Heart right ventricle (tissue), 16 donors: ENCODE measurements at regions of chr20 and their contacts with region 1.

Region 1: DNA sequence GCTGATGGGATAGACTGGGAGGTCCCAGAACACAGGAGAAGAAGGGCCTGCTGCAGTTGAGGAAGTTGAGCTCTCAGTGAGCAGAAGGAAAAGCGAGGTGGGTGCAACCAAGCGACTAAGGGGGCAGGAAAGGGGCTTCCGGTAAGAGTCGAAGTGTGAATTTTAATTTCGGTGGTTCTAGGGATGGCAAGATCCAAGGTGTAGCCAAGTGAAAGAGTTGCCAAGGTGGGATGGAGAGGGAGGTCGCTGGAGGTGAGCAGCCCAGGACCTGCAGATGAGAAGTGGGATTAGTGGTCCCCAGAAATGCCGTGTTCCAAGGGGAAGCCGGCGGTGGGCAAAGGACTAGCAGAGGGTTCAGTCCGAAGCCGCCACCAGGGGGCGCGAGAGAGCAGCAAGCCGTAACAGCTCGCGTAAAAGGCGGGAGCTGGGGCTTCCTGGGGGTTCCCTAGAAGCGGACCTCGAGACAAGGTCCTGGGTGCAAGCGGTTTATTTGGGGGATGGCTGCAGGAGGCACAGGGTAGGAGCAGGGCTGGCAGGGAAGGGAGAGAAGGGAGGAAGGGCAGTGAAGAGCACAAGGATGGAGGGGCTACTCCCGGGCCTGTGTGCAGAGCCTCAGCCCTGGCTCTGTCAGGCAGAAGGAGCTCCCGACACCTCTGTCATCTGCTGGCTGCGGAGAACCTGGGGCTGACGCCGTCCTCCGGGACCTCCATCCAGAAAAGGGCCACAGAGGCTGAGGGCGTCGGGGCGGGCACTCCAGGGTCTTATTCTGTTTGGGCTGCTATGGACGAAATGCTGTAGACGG is 103.6 kb downstream of the PAX1 start:
- DNase-seq: peak; percentile 24 to 53
- ATAC-seq: peak in 2 of 8 donors; percentile 48 to 64
- H3K4me3 ChIP-seq: no peak overlapping the region
- H3K27ac ChIP-seq: no peak overlapping the region
- H3K4me1 ChIP-seq: no peaks in the 10 kb centered on the region
- H3K27me3 ChIP-seq: peaks cover 0 to 24% (median 0%) of the 10 kb centered on the region in 7 donors
- CTCF ChIP-seq: peak; percentile 58 to 82 (median 74)

Region 2: DNA sequence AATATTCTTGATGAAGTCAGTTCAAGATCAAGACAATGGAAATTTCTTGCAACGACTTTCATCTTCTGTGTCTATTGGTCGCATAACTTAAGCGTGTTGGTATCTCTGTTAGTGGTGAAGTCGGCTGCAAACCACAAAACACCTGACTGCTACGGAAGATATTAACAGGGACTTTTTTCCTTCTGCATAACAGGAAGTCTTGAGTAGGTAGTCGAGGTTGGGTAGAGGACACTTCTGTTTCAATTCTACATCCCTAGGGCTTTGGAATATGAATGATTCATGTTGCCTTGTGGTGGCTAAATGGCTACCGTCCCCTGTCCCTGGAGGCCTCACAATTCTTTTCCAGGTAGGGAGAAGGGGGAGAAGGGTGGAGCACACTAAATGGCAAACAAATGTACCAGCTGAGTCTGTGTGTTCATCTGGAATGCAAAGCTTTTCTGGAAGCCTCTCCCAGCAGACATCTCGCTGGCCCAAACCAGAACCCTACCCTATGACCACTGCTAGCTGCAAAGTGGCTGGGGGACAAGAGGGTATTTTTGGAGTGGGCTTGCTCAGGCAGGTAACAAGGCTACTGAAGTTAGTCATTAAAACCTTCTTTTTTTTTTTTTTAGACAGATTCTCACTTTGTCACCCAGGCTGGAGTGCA is 260.6 kb before region 1 on chr20:
- intact Hi-C with region 1: no loop called
- DNase-seq: no peak
- ATAC-seq: no peak
- H3K4me3 ChIP-seq: no peak overlapping the region
- H3K27ac ChIP-seq: no peak overlapping the region
- H3K4me1 ChIP-seq: no peaks in the 10 kb centered on the region
- H3K27me3 ChIP-seq: peaks cover 0 to 45% (median 23%) of the 10 kb centered on the region in 7 donors
- CTCF ChIP-seq: no peak

Region 3: DNA sequence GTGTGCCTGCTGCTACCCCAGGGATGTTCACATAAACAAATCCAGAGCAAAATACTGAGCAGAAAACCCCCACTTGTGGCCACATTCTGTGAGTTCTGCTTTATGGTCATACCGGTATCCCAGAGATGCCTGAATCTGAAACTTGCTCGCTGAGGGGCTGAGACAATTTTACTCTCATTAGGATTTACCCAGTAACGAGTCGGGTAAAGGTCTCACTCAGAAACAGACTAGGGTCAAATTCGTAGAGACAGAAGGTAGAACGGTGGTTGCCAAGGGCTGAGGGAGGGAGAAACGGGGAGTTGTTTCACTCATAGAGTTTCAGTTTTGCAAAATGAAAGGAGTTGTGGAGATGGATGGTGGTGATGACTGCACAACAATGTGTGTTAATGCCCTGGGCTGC is 249.8 kb before region 1 on chr20:
- intact Hi-C with region 1: no loop called
- DNase-seq: no peak
- ATAC-seq: no peak
- H3K4me3 ChIP-seq: no peak overlapping the region
- H3K27ac ChIP-seq: no peak overlapping the region
- H3K4me1 ChIP-seq: no peaks in the 10 kb centered on the region
- H3K27me3 ChIP-seq: peaks cover 0 to 74% (median 34%) of the 10 kb centered on the region in 7 donors
- CTCF ChIP-seq: no peak

Region 4: DNA sequence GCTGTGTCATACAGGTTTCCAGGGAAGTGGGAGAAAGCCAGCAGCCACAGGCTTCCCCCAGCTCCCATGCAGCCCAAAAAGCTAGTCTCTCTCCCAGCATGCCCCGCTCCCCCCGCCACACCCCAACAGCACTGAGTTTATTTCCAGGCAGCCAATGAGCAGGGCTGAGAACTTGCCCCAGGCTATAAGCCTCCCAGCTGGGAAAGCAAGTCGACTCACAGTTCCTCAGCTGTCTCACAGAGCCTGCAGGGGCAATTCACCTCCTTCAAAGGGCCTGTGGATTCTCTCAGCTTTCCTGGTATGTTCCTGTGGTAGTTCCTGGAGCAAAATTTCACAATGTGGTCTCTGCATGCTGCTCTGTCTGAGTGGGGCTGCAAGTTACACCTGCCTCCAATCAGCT is 69.4 kb before region 1 on chr20:
- intact Hi-C with region 1: no loop called
- DNase-seq: no peak
- ATAC-seq: no peak
- H3K4me3 ChIP-seq: no peak overlapping the region
- H3K27ac ChIP-seq: no peak overlapping the region
- H3K4me1 ChIP-seq: no peaks in the 10 kb centered on the region
- H3K27me3 ChIP-seq: no peaks in the 10 kb centered on the region
- CTCF ChIP-seq: no peak

Region 5: GRCh38 chr20:22106308-22106938 is 297.4 kb after region 1 on chr20:
- intact Hi-C with region 1: loop called in 7 of 10 experiments (anchors 5 to 10 kb)
- DNase-seq: no peak
- ATAC-seq: no peak
- H3K4me3 ChIP-seq: no peak overlapping the region
- H3K27ac ChIP-seq: no peak overlapping the region
- H3K4me1 ChIP-seq: no peaks in the 10 kb centered on the region
- H3K27me3 ChIP-seq: no peaks in the 10 kb centered on the region
- CTCF ChIP-seq: peak in 7 of 9 donors; percentile 32 to 59 (median 46)

Region 6: GRCh38 chr20:22248051-22248667 is 439.1 kb after region 1 on chr20:
- intact Hi-C with region 1: loop called in 4 of 10 experiments (anchors 5 to 10 kb)
- DNase-seq: no peak
- ATAC-seq: no peak
- H3K4me3 ChIP-seq: no peak overlapping the region
- H3K27ac ChIP-seq: no peak overlapping the region
- H3K4me1 ChIP-seq: no peaks in the 10 kb centered on the region
- H3K27me3 ChIP-seq: peaks cover 0 to 31% (median 12%) of the 10 kb centered on the region in 7 donors
- CTCF ChIP-seq: peak in 7 of 9 donors; percentile 45 to 66 (median 54)

Region 7: GRCh38 chr20:22312744-22313346 is 503.8 kb after region 1 on chr20:
- intact Hi-C with region 1: loop called in 1 of 10 experiments (anchors 5 kb)
- DNase-seq: peak in 1 of 2 donors; percentile 9
- ATAC-seq: no peak
- H3K4me3 ChIP-seq: no peak overlapping the region
- H3K27ac ChIP-seq: no peak overlapping the region
- H3K4me1 ChIP-seq: no peaks in the 10 kb centered on the region
- H3K27me3 ChIP-seq: peaks cover 0 to 46% (median 30%) of the 10 kb centered on the region in 7 donors
- CTCF ChIP-seq: peak in 8 of 9 donors; percentile 28 to 76 (median 63)